ENCODE measurements at regions of chr6 and their contacts with region 1.

Region 1: DNA sequence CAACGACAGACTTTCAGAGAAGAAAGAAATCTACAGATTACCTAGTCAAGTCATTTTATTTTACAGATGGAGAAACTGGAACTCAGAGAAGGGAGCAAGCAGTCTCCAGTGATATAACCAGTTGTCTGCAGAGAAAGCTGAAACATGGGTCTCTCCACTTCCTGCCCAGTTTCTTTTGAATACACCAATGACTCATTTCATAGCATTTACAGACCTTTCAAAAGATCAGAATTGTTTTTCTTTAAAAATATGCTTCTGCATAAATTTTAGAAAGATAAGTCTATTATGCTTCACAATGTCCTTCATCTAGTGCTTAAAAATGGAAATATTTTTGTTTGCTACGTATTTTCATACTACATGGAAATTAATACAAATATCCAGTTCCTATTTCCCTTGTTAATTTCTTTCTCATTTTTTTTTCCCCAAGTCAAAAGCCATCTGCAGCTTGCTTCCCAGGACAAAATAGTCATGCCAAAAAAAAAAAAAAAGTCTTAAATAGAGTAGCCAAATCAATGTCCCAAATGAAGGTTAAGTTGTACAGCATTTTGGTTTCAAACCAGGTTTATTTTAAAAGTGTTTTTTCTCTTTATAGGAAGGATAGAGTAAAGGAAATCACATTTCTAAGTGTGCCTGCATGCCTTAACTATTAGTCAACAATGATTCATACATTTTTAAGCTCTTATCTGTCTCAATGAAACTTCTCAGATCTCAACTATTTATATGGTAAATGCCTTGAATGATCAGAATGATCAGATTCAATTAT is 36.9 kb downstream of the ARHGAP18 start:
- DNase-seq: no peak
- ATAC-seq: no peak
- H3K4me3 Mint-ChIP-seq: peak overlapping the region; percentile 32
- H3K27ac Mint-ChIP-seq: peak overlapping the region; percentile 85
- H3K4me1 Mint-ChIP-seq: peaks cover 27% of the 10 kb centered on the region
- H3K27me3 Mint-ChIP-seq: no peaks in the 10 kb centered on the region
- CTCF ChIP-seq: no peak

Region 2: GRCh38 chr6:129621247-129621646 is 51.8 kb before region 1 on chr6:
- CTCF ChIA-PET with region 1: no interaction called
- POLR2A ChIA-PET with region 1: no interaction called
- intact Hi-C with region 1: loop called (anchors 5 kb)
- DNase-seq: no peak
- ATAC-seq: peak; percentile 71
- H3K4me3 Mint-ChIP-seq: no peak overlapping the region
- H3K27ac Mint-ChIP-seq: no peak overlapping the region
- H3K4me1 Mint-ChIP-seq: no peaks in the 10 kb centered on the region
- H3K27me3 Mint-ChIP-seq: no peaks in the 10 kb centered on the region
- CTCF ChIP-seq: no peak

Region 3: DNA sequence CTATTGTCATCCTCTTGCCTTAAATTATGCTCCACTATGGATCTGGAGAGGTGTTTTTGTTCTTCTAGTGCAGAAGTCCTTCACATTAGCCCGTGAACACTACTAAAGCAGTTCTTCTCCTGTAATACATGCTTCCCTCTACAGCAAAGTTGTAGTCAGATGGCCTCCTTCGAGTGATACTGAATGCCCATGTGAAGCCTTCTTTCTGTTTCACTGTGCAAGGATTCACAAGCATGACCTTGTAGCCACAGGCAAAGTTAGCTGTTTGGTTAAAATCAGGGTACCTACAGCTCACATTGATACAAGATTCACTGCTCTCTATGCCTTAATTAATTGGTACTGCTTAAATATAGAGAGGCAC is 10.7 kb before region 1 on chr6:
- CTCF ChIA-PET with region 1: no interaction called
- POLR2A ChIA-PET with region 1: no interaction called
- intact Hi-C with region 1: no loop called
- DNase-seq: no peak
- ATAC-seq: no peak
- H3K4me3 Mint-ChIP-seq: no peak overlapping the region
- H3K27ac Mint-ChIP-seq: no peak overlapping the region
- H3K4me1 Mint-ChIP-seq: peaks cover 7% of the 10 kb centered on the region
- H3K27me3 Mint-ChIP-seq: no peaks in the 10 kb centered on the region
- CTCF ChIP-seq: no peak

Region 4: DNA sequence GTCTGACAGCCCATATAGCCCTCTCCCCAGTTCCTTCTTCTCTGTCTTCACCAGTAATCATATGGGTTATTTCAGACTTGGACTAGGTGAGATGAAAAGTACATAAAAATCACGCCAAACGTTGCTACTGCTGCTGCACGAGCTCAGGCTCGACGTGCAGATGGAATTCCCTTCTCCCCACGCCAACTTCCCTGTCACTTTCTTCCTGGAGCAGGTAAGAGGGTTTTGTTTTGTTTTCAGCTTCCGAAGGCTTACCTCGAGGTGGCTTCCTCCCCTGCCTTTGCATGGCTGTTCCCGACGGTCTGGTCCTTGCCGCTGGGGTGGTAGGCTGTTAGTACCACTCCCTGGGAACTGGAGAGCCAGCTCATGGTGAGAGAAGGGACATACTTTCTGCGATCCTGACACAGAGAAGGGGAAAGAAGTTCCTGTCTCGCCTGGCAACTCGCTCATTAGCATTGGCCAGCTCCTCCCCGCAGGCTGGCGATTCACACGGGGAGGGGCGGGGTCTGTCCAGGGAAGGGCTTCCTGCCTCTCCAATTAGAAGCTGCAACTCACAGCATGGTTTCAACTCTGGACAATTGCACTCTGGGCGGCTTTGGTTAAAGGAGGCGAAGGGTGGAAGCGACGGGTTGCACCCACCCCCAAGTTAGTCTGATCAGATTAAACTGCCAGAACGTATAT is 36.8 kb after region 1 on chr6 and contains the start of gene ARHGAP18:
- CTCF ChIA-PET with region 1: interaction called, 5 read pairs
- POLR2A ChIA-PET with region 1: interaction called, 3 read pairs
- intact Hi-C with region 1: loop called (anchors 1 kb)
- DNase-seq: peak; percentile 70
- ATAC-seq: peak; percentile 97
- H3K4me3 Mint-ChIP-seq: peak within 1 kb of the TSS; percentile 98
- H3K27ac Mint-ChIP-seq: peak within 1 kb of the TSS; percentile 93
- H3K4me1 Mint-ChIP-seq: peaks cover 47% of the 10 kb centered on the region
- H3K27me3 Mint-ChIP-seq: no peaks in the 10 kb centered on the region
- CTCF ChIP-seq: no peak
- total RNA-seq, gene ARHGAP18: 7.9 and 9.0 TPM in 2 replicates

Region 5: DNA sequence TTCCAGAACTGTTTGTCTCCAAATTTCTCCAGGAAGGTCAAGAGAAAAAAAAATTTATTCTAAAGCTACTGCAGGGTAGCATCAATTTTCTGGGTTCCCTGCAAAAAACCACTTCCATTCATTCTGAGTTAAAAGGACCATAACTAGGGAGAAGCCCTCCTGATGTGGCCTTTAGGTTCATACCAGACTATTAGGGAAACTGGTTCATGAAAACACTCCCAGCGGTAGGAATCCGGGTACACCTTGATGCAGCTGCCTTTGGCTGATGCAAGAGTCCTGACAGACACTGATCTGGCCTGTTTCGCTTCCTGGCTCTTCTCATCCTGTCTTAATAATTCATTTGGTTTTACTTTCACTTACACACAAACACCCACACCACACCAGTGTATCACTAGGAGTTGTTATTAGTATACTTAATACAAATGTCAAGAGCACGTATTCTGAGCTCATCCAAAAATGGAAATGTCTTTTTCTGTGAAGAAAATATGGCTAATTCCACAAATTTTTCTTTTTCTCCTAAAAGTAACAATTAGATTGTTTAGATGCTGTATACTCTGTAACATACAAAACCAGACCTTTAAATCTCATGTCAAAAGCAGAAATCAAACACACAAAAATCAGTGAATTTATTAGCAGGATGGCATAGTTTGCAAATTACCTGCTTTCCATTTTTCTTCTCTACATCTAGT is 75.3 kb after region 1 on chr6:
- CTCF ChIA-PET with region 1: interaction called, 3 read pairs
- POLR2A ChIA-PET with region 1: no interaction called
- intact Hi-C with region 1: loop called (anchors 1 kb)
- DNase-seq: no peak
- ATAC-seq: peak; percentile 89
- H3K4me3 Mint-ChIP-seq: peak overlapping the region; percentile 66
- H3K27ac Mint-ChIP-seq: peak overlapping the region; percentile 94
- H3K4me1 Mint-ChIP-seq: peaks cover 50% of the 10 kb centered on the region
- H3K27me3 Mint-ChIP-seq: no peaks in the 10 kb centered on the region
- CTCF ChIP-seq: no peak

Region 6: DNA sequence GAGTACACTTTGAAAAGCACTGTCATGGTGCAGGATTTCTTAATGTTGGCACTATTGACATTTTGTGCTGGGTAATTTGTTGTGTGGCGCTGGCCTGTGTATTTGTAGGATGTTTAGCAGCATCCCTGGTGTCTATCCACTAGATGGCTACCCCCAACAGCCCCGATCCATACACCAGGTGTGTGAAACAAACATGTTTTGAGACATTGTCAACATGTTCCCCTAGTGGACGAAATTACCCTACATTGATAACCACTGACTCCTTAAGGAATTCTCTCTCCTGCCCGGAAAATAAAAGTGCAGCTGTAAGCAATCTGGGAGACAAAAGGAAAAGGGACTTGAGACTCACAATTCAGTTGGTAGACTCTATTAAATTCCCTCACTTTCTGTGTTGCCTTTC is 640.1 kb after region 1 on chr6:
- CTCF ChIA-PET with region 1: no interaction called
- POLR2A ChIA-PET with region 1: no interaction called
- intact Hi-C with region 1: no loop called
- DNase-seq: no peak
- ATAC-seq: no peak
- H3K4me3 Mint-ChIP-seq: no peak overlapping the region
- H3K27ac Mint-ChIP-seq: no peak overlapping the region
- H3K4me1 Mint-ChIP-seq: no peaks in the 10 kb centered on the region
- H3K27me3 Mint-ChIP-seq: no peaks in the 10 kb centered on the region
- CTCF ChIP-seq: no peak

Measured in activated B cell treated with CpG ODN at 0.5 μM for 24 hours (primary cell).